Esophagus muscularis mucosa (tissue), 4 donors: ENCODE measurements at regions of chr14 and their contacts with region 1.

Region 1: DNA sequence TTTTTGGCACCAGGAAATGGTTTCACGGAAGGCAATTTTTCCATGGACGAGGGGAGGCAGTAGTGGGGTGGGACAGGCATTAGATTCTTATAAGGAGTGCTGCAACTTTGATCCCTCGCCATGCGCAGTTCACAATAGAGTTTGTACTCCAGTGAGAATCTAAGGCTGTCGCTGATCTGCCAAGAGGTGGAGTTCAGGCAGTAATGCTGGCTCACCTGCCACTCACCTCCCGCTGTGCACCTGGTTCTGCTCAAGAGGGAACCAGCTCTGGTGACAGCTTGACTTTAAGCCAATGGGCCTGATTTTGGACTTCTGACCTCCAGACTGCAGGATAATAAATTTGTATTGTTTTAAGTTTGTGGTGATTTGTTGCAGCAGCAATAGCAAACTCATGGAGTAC is 80.8 kb upstream of the TTC7B start:
- DNase-seq: no peak
- H3K4me3 ChIP-seq: no peak overlapping the region
- H3K27ac ChIP-seq: no peak overlapping the region
- H3K4me1 ChIP-seq: peaks cover 0 to 8% (median 6%) of the 10 kb centered on the region in 4 donors
- H3K27me3 ChIP-seq: no peaks in the 10 kb centered on the region
- CTCF ChIP-seq: no peak
- EP300 ChIP-seq: no peak
- POLR2A ChIP-seq: no peak

Region 2: DNA sequence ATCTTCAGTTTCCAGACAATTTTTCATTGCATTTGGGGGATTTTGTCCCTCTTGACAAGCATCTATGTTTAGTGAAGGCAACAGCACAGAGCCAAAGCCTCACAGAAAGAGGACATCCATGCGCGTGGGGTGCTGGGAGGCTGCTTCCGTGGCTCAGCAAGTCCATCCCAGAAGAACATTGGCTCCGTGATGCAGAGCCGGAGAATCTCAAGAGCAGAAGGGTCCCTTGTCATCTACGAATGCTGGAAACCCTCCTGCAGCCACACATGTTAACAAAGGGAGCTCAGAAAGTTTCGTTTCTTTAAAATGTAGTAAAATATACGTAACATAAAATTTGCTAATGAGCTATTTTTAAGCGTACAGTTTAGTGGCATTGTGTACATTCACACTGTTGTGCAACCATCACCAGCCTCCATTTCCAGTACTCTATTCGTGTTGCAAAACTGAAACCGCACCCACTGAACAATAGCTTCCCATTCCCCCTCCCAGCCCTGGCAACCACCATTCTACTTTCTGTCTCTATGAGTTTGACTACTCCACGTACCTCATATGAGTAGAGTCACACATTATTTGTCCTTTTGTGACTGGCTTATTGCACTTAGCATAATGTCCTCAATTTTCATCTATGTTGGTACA is 266.7 kb before region 1 on chr14:
- intact Hi-C with region 1: no loop called
- DNase-seq: no peak
- H3K4me3 ChIP-seq: no peak overlapping the region
- H3K27ac ChIP-seq: peak overlapping the region in 1 of 4 donors; percentile 84
- H3K4me1 ChIP-seq: peaks cover 36 to 66% (median 58%) of the 10 kb centered on the region in 4 donors
- H3K27me3 ChIP-seq: no peaks in the 10 kb centered on the region
- CTCF ChIP-seq: no peak
- EP300 ChIP-seq: no peak
- POLR2A ChIP-seq: no peak

Region 3: DNA sequence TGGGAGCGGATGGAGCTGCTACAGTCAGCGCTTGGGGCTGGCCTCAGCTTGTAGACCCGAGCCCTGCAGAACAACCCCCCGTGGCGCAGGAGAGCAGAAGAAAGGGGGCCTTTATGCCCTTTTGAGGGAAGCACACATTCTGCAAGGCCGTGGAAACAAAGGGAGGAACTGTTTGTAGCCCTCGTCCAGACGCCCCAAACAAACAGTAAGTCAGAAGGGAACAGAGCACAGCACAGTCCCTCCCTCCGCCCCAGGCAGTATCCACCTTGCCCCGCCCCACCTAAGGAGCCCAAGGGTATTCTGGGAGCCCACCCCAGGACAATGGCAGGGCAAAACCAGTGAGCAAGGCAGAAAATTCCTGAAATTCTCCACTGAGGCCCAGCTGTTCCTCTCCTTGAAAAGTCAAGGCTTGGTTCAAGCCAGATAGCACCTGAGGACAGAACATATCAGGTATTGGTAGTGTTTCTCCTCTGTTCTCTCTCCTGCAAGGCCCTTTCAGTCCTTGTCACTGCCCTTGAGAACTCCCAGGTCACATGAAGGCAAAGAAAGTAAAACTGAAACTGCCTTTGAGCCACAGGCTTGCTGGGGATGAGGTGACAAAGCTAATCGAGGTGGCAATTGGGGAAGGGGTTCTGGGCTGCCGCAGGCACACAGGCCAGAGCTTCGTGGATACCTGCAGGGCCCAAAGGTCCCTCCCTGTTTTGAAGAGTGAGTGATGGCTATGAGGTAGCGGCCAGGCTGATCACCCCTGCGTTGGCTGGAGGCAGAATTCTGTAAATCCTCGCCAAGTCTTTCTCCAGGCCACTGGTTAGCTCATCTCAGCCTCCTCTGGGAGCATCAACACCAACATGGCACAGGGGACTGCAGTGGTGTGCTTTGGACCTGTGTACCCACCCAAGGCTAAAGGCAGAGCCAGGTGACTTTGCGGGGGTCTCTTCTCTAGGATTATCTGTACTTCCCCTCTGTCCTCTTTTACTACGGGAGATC is 217.3 kb after region 1 on chr14:
- intact Hi-C with region 1: no loop called
- DNase-seq: no peak
- H3K4me3 ChIP-seq: peak overlapping the region; percentile 64 to 77 (median 68)
- H3K27ac ChIP-seq: peak overlapping the region; percentile 91 to 98 (median 94)
- H3K4me1 ChIP-seq: peaks cover 42 to 95% (median 86%) of the 10 kb centered on the region in 4 donors
- H3K27me3 ChIP-seq: no peaks in the 10 kb centered on the region
- CTCF ChIP-seq: no peak
- EP300 ChIP-seq: no peak
- POLR2A ChIP-seq: peak; percentile 68

Region 4: DNA sequence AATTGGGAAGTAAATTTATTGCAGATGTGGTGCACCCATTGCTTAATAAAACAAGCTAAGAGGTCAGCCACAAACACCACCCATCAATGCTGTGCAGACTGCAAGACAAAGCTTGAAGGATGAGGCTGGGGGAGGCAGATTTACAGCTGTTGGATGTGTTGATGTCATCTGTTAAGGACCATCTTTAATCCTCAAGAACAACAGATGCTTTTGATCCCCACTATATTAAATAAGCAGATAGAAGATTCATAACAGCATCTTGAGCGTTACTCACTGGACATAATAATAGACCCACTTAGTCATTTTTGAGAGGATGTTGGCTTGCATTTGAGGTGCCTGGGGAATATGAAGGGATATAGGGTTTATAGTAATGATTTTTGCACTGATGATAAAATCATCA is 288.7 kb after region 1 on chr14:
- intact Hi-C with region 1: no loop called
- DNase-seq: no peak
- H3K4me3 ChIP-seq: no peak overlapping the region
- H3K27ac ChIP-seq: no peak overlapping the region
- H3K4me1 ChIP-seq: no peaks in the 10 kb centered on the region
- H3K27me3 ChIP-seq: no peaks in the 10 kb centered on the region
- CTCF ChIP-seq: no peak
- EP300 ChIP-seq: no peak
- POLR2A ChIP-seq: no peak

Region 5: DNA sequence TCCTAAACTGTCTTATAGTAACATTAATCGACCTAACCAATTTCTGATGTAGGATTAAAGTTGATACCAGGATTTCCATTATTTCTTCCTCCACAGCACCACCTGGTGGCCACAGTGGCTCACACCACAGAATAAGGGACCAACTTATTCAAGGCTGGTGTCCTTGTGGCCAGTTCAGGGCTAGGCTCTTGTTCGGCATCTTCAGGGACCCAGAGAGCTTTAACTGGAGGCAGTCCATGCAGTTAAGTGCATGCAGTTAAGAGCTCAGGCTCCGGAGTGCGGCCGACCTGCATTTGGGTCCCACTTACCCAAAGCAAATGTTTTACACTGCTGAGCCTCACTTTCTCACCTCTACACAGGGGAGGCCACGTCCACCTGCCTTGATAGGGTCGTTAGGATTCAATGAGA is 389.5 kb after region 1 on chr14:
- intact Hi-C with region 1: loop called (anchors 5 kb)
- DNase-seq: no peak
- H3K4me3 ChIP-seq: no peak overlapping the region
- H3K27ac ChIP-seq: no peak overlapping the region
- H3K4me1 ChIP-seq: peaks cover 5 to 23% (median 12%) of the 10 kb centered on the region in 4 donors
- H3K27me3 ChIP-seq: no peaks in the 10 kb centered on the region
- CTCF ChIP-seq: peak; percentile 81 to 88 (median 83)
- EP300 ChIP-seq: no peak
- POLR2A ChIP-seq: no peak

Region 6: GRCh38 chr14:91453744-91454143 is 556.7 kb after region 1 on chr14:
- intact Hi-C with region 1: no loop called
- DNase-seq: no peak
- H3K4me3 ChIP-seq: no peak overlapping the region
- H3K27ac ChIP-seq: no peak overlapping the region
- H3K4me1 ChIP-seq: no peaks in the 10 kb centered on the region
- H3K27me3 ChIP-seq: no peaks in the 10 kb centered on the region
- CTCF ChIP-seq: no peak
- EP300 ChIP-seq: no peak
- POLR2A ChIP-seq: no peak